GM13977 (cell line): ENCODE measurements at regions of chr1 and their contacts with region 1.

Region 1: DNA sequence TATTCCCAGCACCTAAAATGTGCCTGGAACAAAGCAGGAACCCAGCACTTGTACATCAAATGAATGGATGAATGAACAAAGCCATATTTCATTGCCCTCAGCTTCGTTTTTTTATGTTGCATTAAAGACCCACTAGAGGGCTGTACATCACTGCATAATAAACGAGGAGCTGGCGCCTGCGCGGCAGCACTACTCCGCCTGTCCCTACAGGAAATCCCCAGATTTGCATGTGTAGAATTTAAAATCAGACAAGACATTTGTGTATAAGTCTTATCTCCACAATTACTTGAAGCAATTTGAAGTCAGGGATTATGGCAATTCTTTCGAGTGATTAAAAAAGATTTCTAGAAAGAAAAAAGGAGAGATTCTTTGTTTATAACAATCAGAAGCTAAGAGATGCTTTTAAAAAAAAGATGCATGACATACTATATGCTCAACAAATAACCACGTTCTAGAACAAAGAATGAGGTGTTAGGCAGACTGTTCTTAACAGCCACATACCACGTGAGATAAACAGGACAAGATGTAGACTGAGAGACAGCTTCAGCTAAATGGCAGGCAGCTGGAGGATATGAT is 5.4 kb upstream of the NEK2 start:
- DNase-seq: peak; percentile 78
- CTCF ChIP-seq: peak; percentile 71

Region 2: GRCh38 chr1:212035123-212035834 is 354.4 kb after region 1 on chr1 and contains the starts of genes DTL and INTS7:
- in situ Hi-C with region 1: loop called (anchors 10 kb)
- DNase-seq: peak; percentile 95
- CTCF ChIP-seq: peak; percentile 77

Region 3: GRCh38 chr1:212368073-212368484 is 687.2 kb after region 1 on chr1:
- in situ Hi-C with region 1: loop called (anchors 25 kb)
- DNase-seq: peak; percentile 68
- CTCF ChIP-seq: peak; percentile 87